ENCODE measurements at regions of chr18 and their contacts with region 1.

Region 1: DNA sequence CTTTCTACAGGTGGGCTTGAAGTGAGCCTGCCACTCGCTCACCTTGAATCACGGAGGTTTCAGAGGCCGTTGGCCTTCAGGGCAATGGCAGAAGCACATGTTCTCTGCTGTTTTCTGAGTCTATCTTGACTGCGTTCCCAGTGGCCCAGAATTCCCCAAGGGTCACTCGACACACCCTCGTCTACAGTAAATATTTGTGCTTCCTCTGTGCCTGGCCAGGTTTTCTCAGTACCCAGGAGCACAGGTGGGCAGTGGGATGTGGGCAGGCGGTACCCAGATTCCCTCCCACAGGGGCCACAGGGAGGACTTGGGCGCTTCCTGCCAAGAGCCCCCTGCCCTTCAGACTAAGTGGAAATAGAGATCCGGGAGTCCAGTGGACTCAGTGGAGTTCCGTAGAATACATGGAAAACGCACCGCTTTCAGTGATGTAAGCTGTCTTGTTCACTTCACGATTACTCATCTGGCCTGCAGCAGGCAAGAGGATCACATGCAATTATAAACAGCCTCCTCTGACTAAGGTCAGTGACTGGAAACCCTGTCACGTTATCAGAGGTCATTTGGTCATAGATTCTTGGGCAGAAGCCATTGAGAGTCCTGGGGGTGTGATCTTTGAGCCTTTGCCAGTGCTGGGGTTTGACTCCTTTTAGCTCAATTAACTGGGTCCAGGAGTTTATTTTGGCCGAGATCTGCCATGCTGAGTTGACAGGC is 179.8 kb downstream of the NEDD4L start:
- DNase-seq: no peak
- ATAC-seq: no peak
- H3K4me3 Mint-ChIP-seq: peak overlapping the region; percentile 47
- H3K27ac Mint-ChIP-seq: peak overlapping the region; percentile 72
- H3K4me1 Mint-ChIP-seq: peaks cover 51% of the 10 kb centered on the region
- H3K27me3 Mint-ChIP-seq: no peaks in the 10 kb centered on the region
- CTCF ChIP-seq: no peak

Region 2: GRCh38 chr18:58205443-58206160 is 18.3 kb before region 1 on chr18:
- CTCF ChIA-PET with region 1: interaction called, 3 read pairs
- POLR2A ChIA-PET with region 1: no interaction called
- intact Hi-C with region 1: loop called (anchors 2 kb)
- DNase-seq: no peak
- ATAC-seq: no peak
- H3K4me3 Mint-ChIP-seq: no peak overlapping the region
- H3K27ac Mint-ChIP-seq: no peak overlapping the region
- H3K4me1 Mint-ChIP-seq: peaks cover 19% of the 10 kb centered on the region
- H3K27me3 Mint-ChIP-seq: no peaks in the 10 kb centered on the region
- CTCF ChIP-seq: no peak

Measured in activated B cell treated with CpG ODN at 0.5 μM for 24 hours (primary cell).